GM12878 (cell line): ENCODE measurements at regions of chr2 and their contacts with region 1.

Region 1: GRCh38 chr2:136129601-136130000 is 11.7 kb upstream of the CXCR4 start:
- DNase-seq: no peak
- ATAC-seq: no peak
- H3K4me3 ChIP-seq: no peak overlapping the region
- H3K27ac ChIP-seq: no peak overlapping the region
- H3K4me1 ChIP-seq: peaks cover 24% of the 10 kb centered on the region
- H3K27me3 ChIP-seq: peaks cover 0 to 9% of the 10 kb centered on the region in 2 experiments; a peak in 2 of 4 replicates
- CTCF ChIP-seq: no peak
- EP300 ChIP-seq: peak in 1 of 2 experiments; percentile 73; a peak in 2 of 4 replicates
- POLR2A ChIP-seq: no peak
- RAD21 ChIP-seq: no peak

Region 2: GRCh38 chr2:136117909-136118818 is 11.4 kb before region 1 on chr2 and contains the start of gene CXCR4:
- CTCF ChIA-PET with region 1: interaction called, 7 read pairs
- POLR2A ChIA-PET with region 1: interaction called, 20 read pairs
- RAD21 ChIA-PET with region 1: interaction called, 62 read pairs
- SMC1A ChIA-PET with region 1: interaction called, 50 read pairs
- in situ Hi-C with region 1: no loop called
- intact Hi-C with region 1: no loop called
- DNase-seq: no peak
- ATAC-seq: peak; percentile 43
- H3K4me3 ChIP-seq: peak within 1 kb of the TSS; percentile 85
- H3K27ac ChIP-seq: peak within 1 kb of the TSS; percentile 40; the same call in 1 of the 2 replicates
- H3K4me1 ChIP-seq: peaks cover 2% of the 10 kb centered on the region; the same call in 1 of the 2 replicates
- H3K27me3 ChIP-seq: peaks cover 0 to 12% of the 10 kb centered on the region in 2 experiments
- CTCF ChIP-seq: peak in 1 of 3 experiments; percentile 19; a peak in 1 of 6 replicates
- EP300 ChIP-seq: no peak
- POLR2A ChIP-seq: peak; percentile 97
- RAD21 ChIP-seq: 0 out of 2 replicates have a peak, but pooled peaks have one; percentile 9
- polyA plus RNA-seq, gene CXCR4: 31.1 to 32.3 TPM